CD14-positive monocyte (primary cell): ENCODE measurements at regions of chr2 and their contacts with region 1.

Region 1: GRCh38 chr2:135525786-135526185 is 5.2 kb downstream of the ZRANB3 start:
- DNase-seq: no peak
- H3K4me3 ChIP-seq: no peak overlapping the region
- H3K4me3 Mint-ChIP-seq: no peak overlapping the region
- H3K27ac ChIP-seq: no peak overlapping the region
- H3K27ac Mint-ChIP-seq: no peak overlapping the region
- H3K4me1 ChIP-seq: peaks cover 6 to 7% of the 10 kb centered on the region in 2 donors
- H3K4me1 Mint-ChIP-seq: peaks cover 4% of the 10 kb centered on the region
- H3K27me3 ChIP-seq: no peaks in the 10 kb centered on the region
- H3K27me3 Mint-ChIP-seq: peaks cover 0 to 4% (median 0%) of the 10 kb centered on the region in 3 donors
- CTCF ChIP-seq: no peak

Region 2: DNA sequence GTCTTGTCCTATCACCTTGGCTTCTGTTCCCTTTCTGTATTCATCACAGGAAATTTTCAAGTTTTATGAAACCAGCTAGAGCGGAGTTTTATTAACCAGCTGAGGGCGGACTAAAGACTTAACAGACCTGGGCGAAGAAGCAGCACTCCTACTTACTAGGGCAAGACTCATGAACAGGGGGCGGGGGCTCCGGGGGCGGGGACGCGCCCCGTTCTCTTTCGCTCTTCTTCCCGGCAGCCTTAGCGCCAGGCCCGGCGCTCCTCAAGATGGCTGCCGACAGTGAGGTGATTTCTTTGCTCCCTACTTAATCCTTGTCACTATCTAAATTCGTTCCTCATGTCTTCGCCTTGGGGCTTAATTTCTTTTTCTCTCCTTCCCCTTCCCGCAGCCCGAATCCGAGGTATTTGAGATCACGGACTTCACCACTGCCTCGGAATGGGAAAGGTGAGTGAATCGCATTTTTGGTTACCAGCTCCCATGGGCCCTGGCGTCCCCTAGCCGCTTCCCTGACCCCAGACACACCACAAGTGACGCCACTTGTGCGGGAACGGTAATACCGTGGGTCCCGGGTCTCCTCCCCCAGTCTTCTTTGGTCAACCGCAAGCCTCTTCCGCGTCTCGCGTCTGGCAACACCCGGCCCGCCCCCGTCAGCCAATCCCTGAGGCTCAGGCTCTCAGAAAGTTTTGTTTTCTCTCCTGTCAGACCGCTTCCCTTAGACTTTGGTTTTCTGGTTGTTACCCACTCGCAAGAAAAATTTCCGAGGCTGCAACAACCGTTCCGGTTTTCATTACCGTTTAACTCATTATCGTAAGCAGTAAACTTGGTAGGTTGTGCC is 473.5 kb before region 1 on chr2 and contains the start of gene RAB3GAP1:
- intact Hi-C with region 1: loop called in 1 of 2 experiments (anchors 5 kb)
- DNase-seq: peak; percentile 76 to 81 (median 77)
- H3K4me3 ChIP-seq: peak within 1 kb of the TSS; percentile 89 to 97 (median 94)
- H3K4me3 Mint-ChIP-seq: peak within 1 kb of the TSS; percentile 99
- H3K27ac ChIP-seq: peak within 1 kb of the TSS; percentile 99 to 100
- H3K27ac Mint-ChIP-seq: peak within 1 kb of the TSS; percentile 100
- H3K4me1 ChIP-seq: peaks cover 17 to 23% of the 10 kb centered on the region in 2 donors
- H3K4me1 Mint-ChIP-seq: peaks cover 27% of the 10 kb centered on the region
- H3K27me3 ChIP-seq: no peaks in the 10 kb centered on the region
- H3K27me3 Mint-ChIP-seq: peaks cover 0 to 1% (median 0%) of the 10 kb centered on the region in 3 donors
- CTCF ChIP-seq: no peak
- polyA plus RNA-seq, gene RAB3GAP1: 8.0 to 17.4 (median 11.3) TPM

Region 3: DNA sequence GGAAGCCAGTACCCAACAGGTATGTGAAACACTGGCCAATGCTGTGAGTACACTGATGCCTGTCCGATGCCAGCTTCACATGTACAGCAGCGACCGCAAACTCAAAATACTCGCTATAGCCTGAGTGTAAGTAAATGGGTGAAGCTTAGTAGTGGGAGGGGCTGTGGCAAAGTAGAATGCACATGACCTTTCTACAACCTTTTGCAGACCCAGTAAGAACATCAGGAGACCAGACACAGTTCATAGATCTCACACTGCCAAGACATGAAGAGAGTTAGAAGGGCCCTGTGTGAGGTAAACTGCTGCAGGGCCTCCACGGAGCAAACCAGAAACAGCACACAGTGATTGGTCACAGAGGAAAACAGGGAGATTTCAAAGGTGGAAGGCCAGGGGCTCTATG is 206.8 kb after region 1 on chr2:
- intact Hi-C with region 1: loop called in 1 of 2 experiments (anchors 10 kb)
- DNase-seq: no peak
- H3K4me3 ChIP-seq: no peak overlapping the region
- H3K4me3 Mint-ChIP-seq: no peak overlapping the region
- H3K27ac ChIP-seq: no peak overlapping the region
- H3K27ac Mint-ChIP-seq: no peak overlapping the region
- H3K4me1 ChIP-seq: no peaks in the 10 kb centered on the region
- H3K4me1 Mint-ChIP-seq: no peaks in the 10 kb centered on the region
- H3K27me3 ChIP-seq: no peaks in the 10 kb centered on the region
- H3K27me3 Mint-ChIP-seq: peaks cover 0 to 1% (median 0%) of the 10 kb centered on the region in 3 donors
- CTCF ChIP-seq: no peak